HEK293 (cell line): ENCODE measurements at regions of chr17 and their contacts with region 1.

Region 1: DNA sequence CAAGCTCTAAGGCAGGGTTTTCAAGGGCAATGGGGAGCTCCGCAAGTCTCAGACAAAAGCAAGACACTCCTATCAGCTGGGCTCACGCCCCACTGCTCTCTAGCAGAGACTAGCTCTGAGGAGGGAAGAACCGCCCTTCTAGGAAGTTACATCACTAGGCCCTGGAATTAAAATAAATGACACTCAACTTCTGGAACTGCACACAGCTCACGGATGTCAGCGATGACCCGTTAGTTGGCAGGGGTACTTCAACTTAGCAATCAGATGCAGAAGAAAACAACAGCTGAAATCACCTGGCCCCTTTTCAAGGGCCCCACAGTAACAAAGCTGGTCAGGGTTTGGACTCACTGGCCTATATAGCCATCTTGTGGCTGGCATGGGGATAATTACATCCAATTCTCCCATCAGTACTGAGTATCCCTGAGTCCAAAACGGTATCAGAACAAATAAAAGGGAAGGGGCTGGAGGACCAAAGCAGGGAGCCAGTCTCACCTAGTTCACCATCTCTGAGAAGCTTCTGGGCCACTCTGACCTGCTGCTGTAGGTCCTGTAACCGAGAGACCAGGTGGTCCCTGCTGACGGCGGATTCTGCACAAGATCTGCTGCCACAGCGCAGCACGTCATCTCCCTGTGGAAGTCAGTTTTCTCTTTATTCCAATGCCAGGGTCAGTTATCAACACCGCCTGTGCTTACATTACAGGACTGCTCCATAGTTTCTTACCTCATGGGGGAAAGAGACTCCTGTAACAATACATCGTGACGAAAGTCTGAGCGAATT is 22.2 kb downstream of the SERPINF1 start:
- H3K4me3 ChIP-seq: no peak overlapping the region
- H3K27ac ChIP-seq: no peak overlapping the region
- H3K4me1 ChIP-seq: peaks cover 11% of the 10 kb centered on the region
- CTCF ChIP-seq: peak; percentile 62; the same call in 1 of the 2 replicates

Region 2: DNA sequence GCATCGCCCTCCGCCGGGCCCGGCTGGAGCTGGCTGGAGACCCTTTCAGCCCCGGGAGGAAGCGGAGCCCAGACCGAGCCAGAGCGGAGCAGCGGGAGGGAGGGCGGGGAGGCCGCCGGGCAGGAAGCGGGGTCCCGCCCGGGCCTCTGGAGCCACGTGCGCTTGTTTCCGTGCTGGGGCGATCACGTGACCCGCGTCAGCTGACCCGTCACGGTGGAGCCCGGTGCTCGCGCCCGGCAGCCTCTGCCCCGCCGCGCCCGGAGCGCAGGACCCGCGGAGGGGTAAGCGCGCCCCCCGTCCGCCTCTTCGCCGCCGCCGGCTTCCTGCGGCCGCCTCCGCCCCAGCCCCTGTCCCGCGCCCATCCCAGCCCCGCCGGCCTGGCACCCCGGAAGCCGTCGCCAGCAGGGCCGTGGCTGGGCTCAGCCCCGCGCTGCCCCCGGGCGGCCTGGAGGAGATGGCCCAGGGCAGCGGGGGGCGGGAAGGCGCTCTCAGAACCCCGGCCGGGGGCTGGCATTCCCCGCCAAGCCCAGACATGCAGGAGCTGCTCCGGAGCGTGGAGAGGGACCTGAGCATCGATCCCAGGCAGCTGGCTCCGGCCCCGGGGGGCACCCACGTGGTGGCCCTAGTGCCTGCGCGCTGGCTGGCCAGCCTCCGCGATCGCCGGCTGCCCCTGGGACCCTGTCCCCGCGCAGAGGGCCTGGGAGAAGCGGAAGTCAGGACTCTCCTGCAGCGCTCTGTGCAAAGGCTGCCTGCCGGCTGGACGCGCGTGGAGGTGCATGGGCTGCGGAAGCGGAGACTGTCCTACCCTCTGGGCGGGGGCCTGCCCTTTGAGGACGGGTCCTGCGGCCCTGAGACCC is 59.3 kb before region 1 on chr17 and contains the start of gene WDR81:
- CTCF ChIA-PET with region 1: interaction called, 104 read pairs
- POLR2A ChIA-PET with region 1: interaction called, 5 read pairs
- H3K4me3 ChIP-seq: peak within 1 kb of the TSS; percentile 47
- H3K27ac ChIP-seq: peak within 1 kb of the TSS; percentile 37; the same call in 1 of the 2 replicates
- H3K4me1 ChIP-seq: no peaks in the 10 kb centered on the region
- CTCF ChIP-seq: no peak

Region 3: GRCh38 chr17:1769822-1770477 is 14.1 kb before region 1 on chr17:
- CTCF ChIA-PET with region 1: interaction called, 16 read pairs
- POLR2A ChIA-PET with region 1: interaction called, 14 read pairs
- H3K4me3 ChIP-seq: no peak overlapping the region
- H3K27ac ChIP-seq: peak overlapping the region; percentile 32
- H3K4me1 ChIP-seq: peaks cover 6% of the 10 kb centered on the region
- CTCF ChIP-seq: no peak